Activated T-helper 1 cell treated with anti-CD3 and anti-CD28 coated beads, Interleukin-12 subunit alpha, Interleukin-12 subunit beta, Interleukin-2, Interleukin-4 antibody, amounts not matched to agents 30 ng/mL and 10 ng/mL and 1 ng/mL, durations not matched to agents 14 hours and 24 hours and 36 hours (primary cell): ENCODE measurements at regions of chr6 and their contacts with region 1.

Region 1: DNA sequence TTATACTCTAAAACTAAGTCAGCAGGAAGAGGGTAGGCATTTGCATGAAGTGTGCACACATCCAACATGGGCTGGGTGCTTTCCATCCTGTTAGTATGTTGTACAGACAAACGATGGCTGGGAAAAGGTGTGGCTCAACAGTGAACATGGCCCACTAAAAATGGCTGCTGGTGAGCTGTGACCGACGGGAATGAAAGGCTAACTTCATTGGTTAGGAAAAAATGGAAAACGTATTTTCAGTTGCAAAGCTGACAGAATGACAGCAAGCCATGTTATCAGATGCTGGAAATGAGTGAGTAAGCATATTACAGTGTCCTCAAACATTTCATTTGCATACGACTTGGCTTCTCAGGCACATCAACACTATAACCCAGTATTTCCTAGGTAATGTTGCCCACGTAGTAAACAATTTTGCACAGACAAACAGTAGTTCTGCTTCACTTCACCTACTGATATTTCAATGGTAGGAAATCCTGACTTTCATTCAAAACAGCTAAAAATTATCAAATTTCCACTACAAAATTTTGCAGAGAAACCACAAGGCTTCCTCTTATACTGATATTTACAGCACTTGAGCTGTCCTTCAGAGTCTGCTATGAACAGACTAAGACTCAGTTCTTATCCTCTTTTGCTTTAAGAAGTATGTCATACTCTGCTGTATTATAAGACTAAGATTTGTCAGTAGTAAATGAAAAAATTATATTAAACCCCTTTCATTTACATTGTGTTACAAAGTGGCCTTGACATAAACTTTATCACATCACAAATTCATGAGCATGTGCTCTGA is 98.9 kb downstream of the IRF4 start:
- DNase-seq: peak; percentile 40
- H3K4me3 Mint-ChIP-seq: peak overlapping the region; percentile 62
- H3K27ac Mint-ChIP-seq: peak overlapping the region; percentile 99
- H3K4me1 Mint-ChIP-seq: peaks cover 77% of the 10 kb centered on the region
- H3K27me3 Mint-ChIP-seq: no peaks in the 10 kb centered on the region

Region 2: GRCh38 chr6:195861-196360 is 294.5 kb before region 1 on chr6:
- intact Hi-C with region 1: loop called (anchors 1 kb)
- DNase-seq: peak; percentile 43
- H3K4me3 Mint-ChIP-seq: no peak overlapping the region
- H3K27ac Mint-ChIP-seq: peak overlapping the region; percentile 24
- H3K4me1 Mint-ChIP-seq: peaks cover 56% of the 10 kb centered on the region
- H3K27me3 Mint-ChIP-seq: peaks cover 5% of the 10 kb centered on the region

Region 3: DNA sequence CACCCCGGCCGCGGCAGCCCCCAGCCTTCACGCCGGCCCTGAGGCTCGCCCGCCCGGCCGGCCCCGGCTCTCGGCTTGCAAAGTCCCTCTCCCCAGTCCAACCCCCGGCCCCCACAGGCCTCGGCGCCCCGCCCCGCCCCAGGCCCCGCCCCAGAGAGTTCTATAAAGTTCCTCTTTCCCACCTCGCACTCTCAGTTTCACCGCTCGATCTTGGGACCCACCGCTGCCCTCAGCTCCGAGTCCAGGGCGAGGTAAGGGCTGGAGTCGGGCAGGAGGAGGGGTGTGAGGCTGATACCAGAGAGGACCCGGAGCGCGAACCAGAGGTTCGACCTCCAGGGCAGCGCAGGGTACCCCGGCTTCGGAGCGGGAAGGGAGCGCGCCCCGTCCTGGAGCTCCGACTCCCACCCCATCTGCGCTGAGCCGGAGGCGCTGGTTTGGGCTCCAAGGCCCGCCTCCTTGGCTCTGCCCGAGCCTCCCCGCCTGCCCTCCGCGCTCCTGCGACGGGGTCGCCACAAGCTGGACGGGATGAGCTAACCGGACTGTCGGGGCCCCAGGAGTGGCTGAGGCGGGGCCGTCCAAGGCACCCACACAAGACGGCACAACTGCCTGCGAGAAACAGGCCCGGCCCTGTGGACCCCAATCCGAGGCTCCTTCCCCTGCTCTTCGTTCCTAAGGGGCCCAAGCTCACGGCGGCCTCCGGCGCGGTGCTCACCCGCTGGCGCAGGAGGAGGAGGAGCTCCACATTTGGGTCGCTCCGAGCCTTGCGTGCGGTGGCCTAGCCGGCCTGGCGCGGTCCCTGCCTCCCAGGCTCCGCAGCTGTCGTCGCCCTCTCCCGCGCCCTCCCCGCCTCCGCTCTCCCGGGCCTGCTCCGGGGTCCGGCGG is 98.6 kb before region 1 on chr6 and contains the start of gene IRF4:
- intact Hi-C with region 1: loop called (anchors 1 kb)
- DNase-seq: peak; percentile 69
- H3K4me3 Mint-ChIP-seq: peak within 1 kb of the TSS; percentile 98
- H3K27ac Mint-ChIP-seq: peak within 1 kb of the TSS; percentile 98
- H3K4me1 Mint-ChIP-seq: peaks cover 41% of the 10 kb centered on the region
- H3K27me3 Mint-ChIP-seq: peaks cover 3% of the 10 kb centered on the region
- total RNA-seq, gene IRF4: 911 and 929 TPM in 2 replicates

Region 4: DNA sequence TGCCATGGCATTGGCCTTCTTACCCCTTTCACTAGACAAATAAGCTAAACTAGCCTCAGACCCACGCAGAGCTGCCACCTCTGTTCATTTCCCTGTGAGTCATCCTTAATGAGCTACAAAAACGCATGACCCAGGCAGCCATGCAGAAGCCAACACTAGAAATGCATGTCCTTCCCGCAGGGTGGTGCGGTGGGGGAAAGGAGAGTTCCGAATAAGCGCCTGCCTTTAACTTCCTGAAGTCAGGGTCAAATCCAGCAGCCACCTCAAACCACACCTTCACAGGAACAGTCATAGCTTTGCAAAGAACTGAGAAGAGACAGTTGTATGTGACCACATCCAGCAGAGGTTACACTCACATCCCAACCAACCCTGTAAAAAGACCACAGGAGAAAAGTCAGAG is 58.5 kb before region 1 on chr6:
- intact Hi-C with region 1: loop called (anchors 1 kb)
- DNase-seq: peak; percentile 70
- H3K4me3 Mint-ChIP-seq: peak overlapping the region; percentile 61
- H3K27ac Mint-ChIP-seq: peak overlapping the region; percentile 60
- H3K4me1 Mint-ChIP-seq: peaks cover 85% of the 10 kb centered on the region
- H3K27me3 Mint-ChIP-seq: no peaks in the 10 kb centered on the region

Region 5: GRCh38 chr6:506508-506907 is 16.1 kb after region 1 on chr6:
- intact Hi-C with region 1: loop called (anchors 1 kb)
- DNase-seq: no peak
- H3K4me3 Mint-ChIP-seq: peak overlapping the region; percentile 64
- H3K27ac Mint-ChIP-seq: peak overlapping the region; percentile 96
- H3K4me1 Mint-ChIP-seq: peaks cover 100% of the 10 kb centered on the region
- H3K27me3 Mint-ChIP-seq: no peaks in the 10 kb centered on the region

Region 6: DNA sequence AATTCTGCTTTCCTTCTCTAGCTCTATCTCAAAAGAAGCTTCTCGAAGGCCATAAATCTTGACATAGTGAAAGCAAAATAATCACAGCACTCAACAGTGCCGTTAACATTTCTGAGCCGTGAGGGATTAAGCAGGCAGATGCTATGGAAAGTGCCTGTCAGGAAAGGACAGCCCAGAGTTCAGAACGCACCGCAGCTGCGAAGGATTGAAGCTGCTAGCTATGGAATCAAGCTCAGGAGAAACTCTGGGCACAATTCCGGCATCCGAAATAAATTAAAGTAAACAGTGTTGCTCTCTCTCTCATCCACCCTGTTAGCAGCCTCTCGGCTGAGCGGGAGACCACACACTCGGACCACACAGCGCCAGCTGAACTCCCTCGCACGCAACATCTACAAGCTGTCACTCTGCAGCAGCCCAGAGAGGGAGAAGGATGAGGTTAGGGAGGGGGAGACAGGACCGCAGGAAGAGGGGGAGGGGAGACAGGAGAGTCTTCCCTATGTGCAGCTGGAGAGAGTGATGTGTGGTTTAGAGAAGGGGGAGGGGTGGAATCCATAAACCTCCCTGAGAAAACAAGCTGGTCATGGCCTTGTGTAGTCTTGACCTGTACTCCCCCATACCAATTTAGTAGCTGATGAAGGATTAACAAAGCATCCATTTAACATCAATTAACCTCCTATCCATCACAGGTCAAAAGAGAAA is 193.4 kb after region 1 on chr6:
- intact Hi-C with region 1: loop called (anchors 2 kb)
- DNase-seq: no peak
- H3K4me3 Mint-ChIP-seq: peak overlapping the region; percentile 41
- H3K27ac Mint-ChIP-seq: peak overlapping the region; percentile 16
- H3K4me1 Mint-ChIP-seq: peaks cover 47% of the 10 kb centered on the region
- H3K27me3 Mint-ChIP-seq: no peaks in the 10 kb centered on the region